ENCODE measurements at regions of chr7 and their contacts with region 1.

Region 1: GRCh38 chr7:35729061-35729783 is 34.3 kb upstream of the HERPUD2 start:
- DNase-seq: peak; percentile 22
- H3K4me3 Mint-ChIP-seq: no peak overlapping the region
- H3K27ac Mint-ChIP-seq: peak overlapping the region; percentile 43
- H3K4me1 Mint-ChIP-seq: peaks cover 58% of the 10 kb centered on the region
- H3K27me3 Mint-ChIP-seq: peaks cover 3% of the 10 kb centered on the region

Region 2: DNA sequence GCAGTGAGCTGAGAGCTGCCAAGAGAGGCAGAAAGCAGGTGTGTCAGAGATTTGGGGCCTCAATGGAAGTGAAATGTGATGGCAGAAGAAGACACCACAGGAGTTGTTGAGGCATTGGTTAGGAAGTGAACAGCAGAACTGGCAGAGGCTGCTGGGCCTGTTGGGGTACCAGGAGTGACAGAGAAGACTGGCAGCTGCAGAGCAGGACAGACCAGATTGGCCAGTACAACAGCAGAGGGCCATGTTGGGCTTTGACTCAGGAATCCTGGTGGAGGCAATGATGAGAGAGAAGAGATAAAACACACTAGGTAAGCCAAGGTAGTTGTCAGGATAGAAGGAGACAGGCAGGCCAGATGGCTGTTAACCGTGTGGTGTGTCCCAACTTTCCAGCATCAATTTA is 14.4 kb before region 1 on chr7:
- CTCF ChIA-PET with region 1: interaction called, 15 read pairs
- POLR2A ChIA-PET with region 1: no interaction called
- DNase-seq: no peak
- H3K4me3 Mint-ChIP-seq: no peak overlapping the region
- H3K27ac Mint-ChIP-seq: no peak overlapping the region
- H3K4me1 Mint-ChIP-seq: peaks cover 9% of the 10 kb centered on the region
- H3K27me3 Mint-ChIP-seq: peaks cover 6% of the 10 kb centered on the region

Region 3: GRCh38 chr7:35785250-35785649 is 56.0 kb after region 1 on chr7:
- CTCF ChIA-PET with region 1: no interaction called
- POLR2A ChIA-PET with region 1: no interaction called
- DNase-seq: no peak
- H3K4me3 Mint-ChIP-seq: no peak overlapping the region
- H3K27ac Mint-ChIP-seq: no peak overlapping the region
- H3K4me1 Mint-ChIP-seq: no peaks in the 10 kb centered on the region
- H3K27me3 Mint-ChIP-seq: peaks cover 6% of the 10 kb centered on the region

Measured in activated CD4-positive, alpha-beta T cell treated with anti-CD3 and anti-CD28 coated beads, Interleukin-2, amount 10 ng/mL, durations not matched to agents 7 days and 5 days (primary cell).